ENCODE measurements at regions of chr19 and their contacts with region 1.

Region 1: DNA sequence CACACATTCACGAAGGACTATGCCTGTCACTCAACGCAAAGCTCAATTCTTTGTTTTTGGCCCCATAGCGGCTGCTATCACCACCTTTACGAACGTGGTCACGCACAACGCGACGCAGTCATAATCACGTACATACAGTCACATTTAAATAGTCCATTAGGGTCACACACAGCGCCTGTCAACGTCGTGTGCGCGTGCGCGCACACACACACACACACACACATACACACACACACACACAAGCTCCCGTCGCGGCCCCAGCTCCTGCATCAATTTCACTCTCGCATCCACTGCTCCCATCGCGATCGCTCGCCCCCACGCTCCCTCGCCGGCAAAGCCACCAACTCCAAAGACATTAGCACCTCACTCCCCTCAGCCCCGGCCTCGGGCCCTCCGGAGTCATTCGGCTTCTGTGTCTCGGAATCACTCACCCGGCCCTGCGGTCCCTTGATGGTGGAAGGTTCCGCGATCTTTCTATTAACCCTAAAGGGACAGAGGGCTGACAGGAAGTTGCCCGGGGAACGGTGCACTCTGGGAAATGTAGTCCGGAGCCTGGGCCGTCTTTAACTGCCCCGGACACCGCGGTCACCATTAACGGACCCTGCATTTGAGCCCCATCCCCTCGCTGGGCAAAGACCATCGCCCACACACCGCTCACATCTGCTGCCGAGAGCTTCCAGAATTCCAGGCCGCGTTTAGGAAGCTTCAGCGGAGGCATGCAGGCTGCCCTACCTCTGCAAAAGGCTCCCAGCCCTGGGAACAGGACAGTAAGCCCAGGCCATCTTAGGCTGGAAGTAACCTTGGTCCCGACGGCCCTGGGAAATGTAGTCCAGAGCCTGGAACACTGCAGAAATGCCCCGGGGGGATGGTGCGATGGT is at the start of gene ZNF790:
- DNase-seq: peak; percentile 86 to 97
- H3K4me3 ChIP-seq: peak within 1 kb of the TSS; percentile 74 to 80 (median 76)
- H3K27ac ChIP-seq: peak within 1 kb of the TSS; percentile 84 to 95 (median 92)
- H3K4me1 ChIP-seq: peaks cover 9 to 29% (median 23%) of the 10 kb centered on the region in 4 donors
- H3K27me3 ChIP-seq: no peaks in the 10 kb centered on the region
- CTCF ChIP-seq: no peak
- EP300 ChIP-seq: no peak
- POLR2A ChIP-seq: no peak
- total RNA-seq, gene ZNF790: 1.2 to 13.6 (median 8.2) TPM in 4 of 5 donors, not detected in the other

Region 2: DNA sequence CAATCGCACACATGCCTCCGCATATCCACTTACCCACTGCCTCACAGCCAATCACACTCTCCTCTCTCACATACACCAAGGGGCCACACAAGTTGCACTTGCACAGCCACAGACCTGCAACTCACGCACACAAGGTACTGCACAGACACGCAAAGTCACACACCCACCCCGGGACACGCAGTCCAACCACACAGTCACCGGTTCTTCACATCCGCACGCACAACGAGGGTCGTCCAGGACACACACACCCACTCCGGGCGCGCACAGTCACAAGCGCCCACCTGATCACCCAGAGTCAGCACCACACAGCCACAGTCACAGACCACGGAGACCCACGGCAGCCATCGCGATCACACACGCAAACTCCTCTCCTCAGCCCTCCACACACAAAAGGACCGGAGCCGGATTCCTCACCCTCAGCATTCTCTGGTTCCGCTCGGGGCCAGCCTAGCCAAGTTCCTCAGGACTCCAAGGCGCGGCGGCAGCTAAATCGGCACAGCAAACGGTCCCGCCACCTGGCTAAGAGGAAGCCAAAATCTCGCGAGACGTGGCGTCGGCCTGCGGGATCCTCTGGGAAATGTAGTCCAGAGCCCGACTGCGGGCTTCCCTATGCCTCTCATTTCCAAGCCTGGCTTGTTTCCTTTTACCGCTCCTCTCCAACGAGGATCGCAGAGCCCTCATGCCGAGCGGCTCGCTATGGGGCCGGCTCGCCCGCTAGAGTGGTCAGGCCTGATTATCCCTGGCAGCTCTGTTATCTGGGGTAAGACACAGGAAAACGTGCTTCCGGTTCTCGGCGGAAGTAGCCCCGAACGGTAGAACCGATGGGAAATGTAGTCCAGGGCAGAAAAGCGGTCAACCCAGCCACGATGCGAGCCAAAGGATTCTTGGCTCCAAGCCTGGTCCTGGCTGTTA is 65.6 kb before region 1 on chr19 and contains the start of gene ZNF850:
- intact Hi-C with region 1: loop called (anchors 10 kb)
- DNase-seq: peak; percentile 95 to 97
- H3K4me3 ChIP-seq: peak within 1 kb of the TSS; percentile 54 to 93 (median 71)
- H3K27ac ChIP-seq: peak within 1 kb of the TSS; percentile 68 to 89 (median 88)
- H3K4me1 ChIP-seq: peaks cover 0 to 23% (median 19%) of the 10 kb centered on the region in 4 donors
- H3K27me3 ChIP-seq: peaks cover 0 to 6% (median 0%) of the 10 kb centered on the region in 3 donors
- CTCF ChIP-seq: no peak
- EP300 ChIP-seq: no peak
- POLR2A ChIP-seq: no peak
- total RNA-seq, gene ZNF850: 0.89 to 10.1 (median 2.2) TPM in 4 of 5 donors, not detected in the other

Region 3: DNA sequence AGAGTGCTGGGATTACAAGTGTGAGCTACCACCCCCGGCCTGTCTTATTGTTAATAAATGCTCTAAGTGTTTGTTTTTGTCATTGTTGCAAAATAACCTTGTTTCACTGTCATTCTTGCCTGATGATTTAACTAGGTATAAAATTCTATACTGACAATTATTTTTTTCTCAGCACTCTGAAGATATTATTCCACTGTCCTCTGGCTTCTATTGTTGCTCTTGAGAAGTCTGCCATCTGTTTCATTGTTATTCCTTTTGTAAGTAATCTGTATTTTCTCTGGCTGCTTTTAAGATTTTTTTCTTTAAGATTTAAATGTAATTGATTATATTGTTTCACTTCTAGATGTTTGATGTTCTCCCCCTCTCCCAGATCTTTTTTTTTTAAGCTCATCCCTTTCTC is 257.7 kb after region 1 on chr19:
- intact Hi-C with region 1: no loop called
- DNase-seq: no peak
- H3K4me3 ChIP-seq: no peak overlapping the region
- H3K27ac ChIP-seq: no peak overlapping the region
- H3K4me1 ChIP-seq: no peaks in the 10 kb centered on the region
- H3K27me3 ChIP-seq: no peaks in the 10 kb centered on the region
- CTCF ChIP-seq: no peak
- EP300 ChIP-seq: no peak
- POLR2A ChIP-seq: no peak